CD14-positive monocyte (primary cell): ENCODE measurements at regions of chr16 and their contacts with region 1.

Region 1: DNA sequence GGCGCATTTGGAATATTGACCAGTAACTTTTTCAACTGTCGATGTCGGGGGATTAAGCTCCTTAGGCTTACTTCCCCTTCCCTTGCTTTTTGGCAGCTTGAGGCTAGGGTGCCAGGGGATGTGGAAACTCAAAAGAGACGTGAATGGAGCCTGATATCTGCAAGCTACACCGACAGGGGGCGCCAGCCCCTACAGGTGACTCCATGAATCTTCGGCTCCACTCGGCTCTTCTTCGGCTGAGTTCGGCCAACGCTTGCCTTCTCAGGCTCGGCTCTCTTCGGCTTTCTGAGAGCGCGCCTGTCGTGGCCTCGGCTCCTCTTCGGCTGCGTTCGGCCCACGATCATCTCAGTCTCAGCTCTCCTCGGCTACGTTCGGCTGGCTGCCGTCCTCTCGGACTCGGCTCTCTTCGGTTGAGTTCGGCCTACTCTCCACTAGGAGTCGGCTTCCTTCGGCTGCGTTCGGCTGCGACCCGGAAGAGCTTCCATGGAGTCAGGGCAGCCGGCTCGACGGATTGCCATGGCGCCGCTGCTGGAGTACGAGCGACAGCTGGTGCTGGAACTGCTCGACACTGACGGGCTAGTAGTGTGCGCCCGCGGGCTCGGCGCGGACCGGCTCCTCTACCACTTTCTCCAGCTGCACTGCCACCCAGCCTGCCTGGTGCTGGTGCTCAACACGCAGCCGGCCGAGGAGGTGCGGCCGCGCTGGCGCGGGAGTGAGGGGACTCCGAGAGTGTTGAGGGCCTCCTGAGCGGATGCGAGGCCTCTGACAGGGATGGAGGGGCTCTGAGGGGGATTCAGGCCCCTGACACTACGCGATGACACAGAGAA is at the start of gene ERCC4:
- DNase-seq: peak; percentile 99 to 100 (median 99)
- H3K4me3 ChIP-seq: peak within 1 kb of the TSS; percentile 83 to 85 (median 85)
- H3K4me3 Mint-ChIP-seq: peak within 1 kb of the TSS; percentile 88 to 96
- H3K27ac ChIP-seq: peak within 1 kb of the TSS; percentile 22 to 92
- H3K27ac Mint-ChIP-seq: peak within 1 kb of the TSS; percentile 63 to 96 (median 85)
- H3K4me1 ChIP-seq: peaks cover 10 to 18% of the 10 kb centered on the region in 2 donors
- H3K4me1 Mint-ChIP-seq: peaks cover 18% of the 10 kb centered on the region
- H3K27me3 ChIP-seq: peaks cover 0 to 2% of the 10 kb centered on the region in 2 donors
- H3K27me3 Mint-ChIP-seq: peaks cover 4 to 11% (median 7%) of the 10 kb centered on the region in 3 donors
- CTCF ChIP-seq: peak; percentile 95
- polyA plus RNA-seq, gene ERCC4: 1.8 to 11.8 (median 5.9) TPM

Region 2: GRCh38 chr16:13839577-13839976 is 80.3 kb before region 1 on chr16:
- intact Hi-C with region 1: no loop called
- DNase-seq: no peak
- H3K4me3 ChIP-seq: no peak overlapping the region
- H3K4me3 Mint-ChIP-seq: no peak overlapping the region
- H3K27ac ChIP-seq: no peak overlapping the region
- H3K27ac Mint-ChIP-seq: no peak overlapping the region
- H3K4me1 ChIP-seq: no peaks in the 10 kb centered on the region
- H3K4me1 Mint-ChIP-seq: no peaks in the 10 kb centered on the region
- H3K27me3 ChIP-seq: no peaks in the 10 kb centered on the region
- H3K27me3 Mint-ChIP-seq: peaks cover 0 to 4% (median 0%) of the 10 kb centered on the region in 3 donors
- CTCF ChIP-seq: no peak

Region 3: DNA sequence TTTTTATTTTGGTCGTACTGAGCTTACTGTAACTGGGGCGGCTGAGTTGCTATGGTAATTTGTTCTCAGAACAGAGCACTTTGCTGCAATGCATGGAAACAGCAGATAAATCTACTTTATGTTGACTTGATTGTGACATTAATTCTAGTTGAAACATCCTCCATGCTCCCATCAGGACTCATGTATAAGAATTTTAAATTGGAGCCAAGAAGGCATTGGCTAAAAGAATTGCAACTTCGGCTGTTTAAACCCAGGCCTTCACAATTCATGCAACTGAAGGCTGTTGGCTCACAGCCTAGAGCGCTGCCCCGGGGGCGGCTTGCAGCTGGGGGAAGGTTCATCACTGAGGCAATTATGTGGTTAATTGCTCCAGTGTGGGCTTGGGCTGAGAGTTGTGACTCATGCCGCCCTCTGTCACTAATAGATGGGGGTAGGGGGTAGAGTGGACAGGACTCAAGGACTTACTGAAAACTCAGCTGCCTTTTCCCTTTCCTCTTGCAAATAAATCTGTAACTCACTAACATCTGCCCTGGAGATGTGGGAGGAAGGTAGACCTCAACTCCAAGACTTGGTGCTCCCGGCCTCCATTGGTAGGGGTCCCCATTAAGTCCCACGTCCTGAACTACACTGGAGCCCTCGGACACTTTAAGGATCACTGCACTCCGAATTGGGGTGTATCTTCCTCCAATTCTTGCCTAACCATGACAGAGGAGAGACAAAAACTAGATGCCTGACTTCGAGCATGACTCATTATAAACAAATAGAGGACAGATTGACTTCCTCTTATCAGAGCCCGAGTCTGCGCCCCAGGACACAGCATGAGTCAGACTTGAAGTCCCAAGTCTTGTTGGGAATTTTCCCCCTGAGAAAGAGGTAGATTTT is 37.5 kb after region 1 on chr16:
- intact Hi-C with region 1: loop called in 1 of 2 experiments (anchors 5 kb)
- DNase-seq: peak; percentile 84 to 97 (median 90)
- H3K4me3 ChIP-seq: peak overlapping the region in 2 of 3 experiments; percentile 9 to 65
- H3K4me3 Mint-ChIP-seq: peak overlapping the region; percentile 65 to 89
- H3K27ac ChIP-seq: peak overlapping the region; percentile 43 to 87
- H3K27ac Mint-ChIP-seq: peak overlapping the region; percentile 90 to 99 (median 98)
- H3K4me1 ChIP-seq: peaks cover 24 to 26% of the 10 kb centered on the region in 2 donors
- H3K4me1 Mint-ChIP-seq: peaks cover 24% of the 10 kb centered on the region
- H3K27me3 ChIP-seq: no peaks in the 10 kb centered on the region
- H3K27me3 Mint-ChIP-seq: peaks cover 5 to 11% (median 10%) of the 10 kb centered on the region in 3 donors
- CTCF ChIP-seq: no peak

Region 4: GRCh38 chr16:14070877-14071575 is 151.1 kb after region 1 on chr16 and contains the start of gene MRTFB:
- intact Hi-C with region 1: loop called (anchors 5 to 10 kb)
- DNase-seq: peak; percentile 22 to 54 (median 22)
- H3K4me3 ChIP-seq: peak within 1 kb of the TSS; percentile 72 to 89 (median 73)
- H3K4me3 Mint-ChIP-seq: peak within 1 kb of the TSS; percentile 86 to 92
- H3K27ac ChIP-seq: no peak within 1 kb of the TSS
- H3K27ac Mint-ChIP-seq: peak within 1 kb of the TSS in 3 of 7 donors; percentile 53 to 71 (median 66)
- H3K4me1 ChIP-seq: peaks cover 11 to 17% of the 10 kb centered on the region in 2 donors
- H3K4me1 Mint-ChIP-seq: peaks cover 11% of the 10 kb centered on the region
- H3K27me3 ChIP-seq: peaks cover 5 to 14% of the 10 kb centered on the region in 2 donors
- H3K27me3 Mint-ChIP-seq: peaks cover 4 to 17% (median 15%) of the 10 kb centered on the region in 3 donors
- CTCF ChIP-seq: no peak
- polyA plus RNA-seq, gene MRTFB: 0.69 to 1.4 (median 0.87) TPM

Region 5: GRCh38 chr16:14285513-14286385 is 365.9 kb after region 1 on chr16:
- intact Hi-C with region 1: loop called in 1 of 2 experiments (anchors 5 kb)
- DNase-seq: peak; percentile 88 to 92 (median 89)
- H3K4me3 ChIP-seq: peak overlapping the region; percentile 86 to 92 (median 88)
- H3K4me3 Mint-ChIP-seq: peak overlapping the region; percentile 91 to 92
- H3K27ac ChIP-seq: peak overlapping the region; percentile 68 to 73
- H3K27ac Mint-ChIP-seq: peak overlapping the region; percentile 57 to 88 (median 76)
- H3K4me1 ChIP-seq: peaks cover 32 to 42% of the 10 kb centered on the region in 2 donors
- H3K4me1 Mint-ChIP-seq: peaks cover 49% of the 10 kb centered on the region
- H3K27me3 ChIP-seq: no peaks in the 10 kb centered on the region
- H3K27me3 Mint-ChIP-seq: peaks cover 0 to 3% (median 3%) of the 10 kb centered on the region in 3 donors
- CTCF ChIP-seq: no peak

Region 6: DNA sequence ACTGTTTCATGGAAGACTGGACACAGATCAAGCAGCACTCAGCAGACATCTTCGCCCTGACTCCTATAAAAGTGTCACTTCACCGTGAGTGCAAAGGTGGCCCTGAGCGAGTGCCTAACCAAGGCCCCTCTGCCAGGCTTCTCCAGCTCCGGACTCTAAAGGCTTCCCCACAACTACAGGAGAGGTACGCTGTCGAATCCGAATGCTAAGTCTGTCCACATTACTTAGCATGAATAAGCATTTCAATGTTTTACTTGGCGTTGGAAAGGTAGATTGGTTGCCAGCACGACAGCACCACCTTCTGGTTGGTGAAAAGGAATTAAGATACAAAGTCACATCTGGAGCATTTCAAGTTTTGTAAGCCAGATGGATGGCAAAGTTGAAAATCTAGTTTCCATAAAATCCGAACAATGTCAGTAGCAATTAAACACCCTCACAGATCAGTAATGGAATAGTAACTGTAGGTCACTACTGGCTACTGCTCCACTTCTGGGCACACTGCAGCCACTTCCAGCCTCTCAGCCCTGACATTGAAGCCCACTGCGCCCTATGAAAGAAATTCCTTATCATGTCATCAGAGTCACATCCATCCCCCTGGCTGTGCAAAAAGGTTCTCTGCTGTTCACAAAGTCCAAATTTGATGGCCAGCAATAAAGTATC is 609.2 kb after region 1 on chr16:
- intact Hi-C with region 1: loop called (anchors 2 to 5 kb)
- DNase-seq: peak; percentile 58 to 64 (median 60)
- H3K4me3 ChIP-seq: peak overlapping the region in 1 of 3 experiments; percentile 10
- H3K4me3 Mint-ChIP-seq: no peak overlapping the region
- H3K27ac ChIP-seq: no peak overlapping the region
- H3K27ac Mint-ChIP-seq: peak overlapping the region in 1 of 7 donors; percentile 49
- H3K4me1 ChIP-seq: peaks cover 4% of the 10 kb centered on the region in 2 donors
- H3K4me1 Mint-ChIP-seq: peaks cover 6% of the 10 kb centered on the region
- H3K27me3 ChIP-seq: no peaks in the 10 kb centered on the region
- H3K27me3 Mint-ChIP-seq: no peaks in the 10 kb centered on the region
- CTCF ChIP-seq: peak; percentile 76

Region 7: GRCh38 chr16:14632692-14633569 is 713.0 kb after region 1 on chr16 and contains the start of gene BFAR:
- intact Hi-C with region 1: loop called (anchors 5 to 10 kb)
- DNase-seq: peak; percentile 98 to 99 (median 99)
- H3K4me3 ChIP-seq: peak within 1 kb of the TSS; percentile 65 to 95 (median 93)
- H3K4me3 Mint-ChIP-seq: peak within 1 kb of the TSS; percentile 99
- H3K27ac ChIP-seq: peak within 1 kb of the TSS; percentile 91 to 94
- H3K27ac Mint-ChIP-seq: peak within 1 kb of the TSS; percentile 97 to 100 (median 97)
- H3K4me1 ChIP-seq: peaks cover 39 to 48% of the 10 kb centered on the region in 2 donors
- H3K4me1 Mint-ChIP-seq: peaks cover 43% of the 10 kb centered on the region
- H3K27me3 ChIP-seq: no peaks in the 10 kb centered on the region
- H3K27me3 Mint-ChIP-seq: no peaks in the 10 kb centered on the region
- CTCF ChIP-seq: no peak
- polyA plus RNA-seq, gene BFAR: 27.5 to 36.0 (median 28.6) TPM